Activated CD8-positive, alpha-beta memory T cell treated with anti-CD3 and anti-CD28 coated beads, Interleukin-2, amount 10 ng/mL, durations not matched to agents 7 days and 5 days (primary cell): ENCODE measurements at regions of chr17 and their contacts with region 1.

Region 1: DNA sequence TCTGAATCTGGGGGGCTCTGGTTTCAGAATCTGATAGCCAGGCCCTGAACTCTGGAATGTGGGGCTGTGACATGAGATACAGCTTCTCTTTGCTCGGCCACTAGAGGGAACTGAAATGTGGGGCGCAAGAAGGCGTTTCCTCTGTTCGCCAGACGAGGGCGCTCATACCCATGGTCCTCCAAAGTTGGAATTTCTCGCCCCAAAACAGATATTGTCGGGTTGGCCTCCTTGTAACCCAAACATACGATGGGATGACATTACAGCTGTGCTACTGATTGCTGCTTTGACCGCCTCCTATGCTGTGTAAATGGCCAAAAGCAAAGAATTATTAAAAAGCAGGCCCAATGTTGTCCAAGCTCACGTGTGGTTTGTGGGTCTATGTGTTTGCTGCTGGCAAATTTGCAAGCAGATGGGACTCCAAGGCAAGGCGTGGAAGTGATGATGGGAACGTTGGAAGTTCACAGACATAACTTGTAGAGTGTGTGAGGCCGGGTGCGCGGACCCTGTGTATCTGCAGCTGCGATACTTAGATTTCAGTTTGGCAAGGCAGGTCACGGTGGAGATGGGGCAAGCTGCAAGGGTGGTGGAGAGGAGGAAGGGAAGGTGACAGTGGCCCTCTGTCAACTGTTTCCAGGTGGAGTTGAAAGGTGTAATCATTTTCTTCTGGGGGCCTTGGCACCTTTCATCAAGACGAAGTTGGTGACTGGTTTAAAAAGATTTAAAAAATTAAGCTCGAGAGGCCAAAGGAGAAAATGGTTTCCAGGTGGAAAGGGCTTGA is 13.0 kb upstream of the MSI2 start:
- DNase-seq: peak; percentile 81
- ATAC-seq: peak; percentile 85
- H3K4me3 Mint-ChIP-seq: no peak overlapping the region
- H3K27ac Mint-ChIP-seq: no peak overlapping the region
- H3K4me1 Mint-ChIP-seq: peaks cover 6% of the 10 kb centered on the region
- H3K27me3 Mint-ChIP-seq: peaks cover 23% of the 10 kb centered on the region

Region 2: GRCh38 chr17:57357399-57357807 is 114.0 kb after region 1 on chr17:
- CTCF ChIA-PET with region 1: interaction called, 20 read pairs
- DNase-seq: no peak
- ATAC-seq: no peak
- H3K4me3 Mint-ChIP-seq: peak overlapping the region; percentile 9
- H3K27ac Mint-ChIP-seq: peak overlapping the region; percentile 79
- H3K4me1 Mint-ChIP-seq: peaks cover 54% of the 10 kb centered on the region
- H3K27me3 Mint-ChIP-seq: no peaks in the 10 kb centered on the region

Region 3: GRCh38 chr17:57440522-57441485 is 197.4 kb after region 1 on chr17:
- CTCF ChIA-PET with region 1: interaction called, 27 read pairs
- DNase-seq: peak; percentile 80
- ATAC-seq: peak; percentile 80
- H3K4me3 Mint-ChIP-seq: peak overlapping the region; percentile 10
- H3K27ac Mint-ChIP-seq: peak overlapping the region; percentile 85
- H3K4me1 Mint-ChIP-seq: peaks cover 55% of the 10 kb centered on the region
- H3K27me3 Mint-ChIP-seq: no peaks in the 10 kb centered on the region

Region 4: GRCh38 chr17:57515656-57516211 is 272.4 kb after region 1 on chr17:
- CTCF ChIA-PET with region 1: interaction called, 10 read pairs
- DNase-seq: no peak
- ATAC-seq: no peak
- H3K4me3 Mint-ChIP-seq: no peak overlapping the region
- H3K27ac Mint-ChIP-seq: no peak overlapping the region
- H3K4me1 Mint-ChIP-seq: peaks cover 3% of the 10 kb centered on the region
- H3K27me3 Mint-ChIP-seq: no peaks in the 10 kb centered on the region

Region 5: DNA sequence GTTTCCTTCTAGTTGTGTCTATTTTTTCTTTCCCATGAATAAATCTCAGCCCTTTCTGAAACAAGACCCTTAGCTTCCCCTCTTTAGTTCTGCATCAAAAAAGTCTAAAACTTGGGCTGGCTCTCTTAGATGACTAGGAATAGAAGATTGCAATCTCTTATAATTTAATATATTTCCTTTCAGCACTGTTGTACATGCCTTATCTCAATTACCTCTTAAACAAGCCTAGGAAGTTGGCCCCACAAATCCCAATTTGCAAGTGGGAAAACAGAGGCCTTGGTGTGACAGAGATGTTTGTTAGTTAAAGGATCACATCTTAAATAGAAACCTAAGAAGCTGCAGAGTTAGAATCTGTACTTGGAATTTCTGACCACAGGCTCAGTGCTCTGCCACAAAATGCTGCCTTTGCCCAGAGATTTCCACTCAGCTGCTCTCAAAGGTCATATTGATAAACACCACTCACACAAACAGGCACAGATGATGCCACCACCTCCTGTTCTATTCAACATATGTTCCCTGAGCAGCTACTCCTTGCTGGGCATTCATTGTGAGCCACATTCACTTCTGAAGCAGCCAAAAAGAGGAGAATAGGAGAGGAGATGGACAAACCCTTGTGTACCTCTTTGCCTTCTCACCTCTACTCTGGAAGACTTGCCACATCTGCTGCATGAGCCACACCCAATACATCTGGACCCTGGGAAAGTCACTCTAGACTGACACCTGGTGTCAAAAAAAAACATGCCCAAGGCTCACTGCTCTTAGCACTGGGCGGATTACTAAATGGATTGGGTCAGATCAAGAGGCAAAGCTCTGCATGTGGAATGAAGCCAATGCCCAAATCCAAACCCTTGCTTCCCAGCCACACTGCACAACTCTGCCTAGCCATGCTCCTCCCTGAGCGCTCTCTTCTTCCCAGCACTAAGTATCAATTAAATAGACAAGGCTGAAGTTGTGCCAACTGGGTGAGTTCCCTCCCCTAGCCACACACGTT is 496.3 kb after region 1 on chr17:
- CTCF ChIA-PET with region 1: interaction called, 34 read pairs
- DNase-seq: no peak
- ATAC-seq: peak; percentile 89
- H3K4me3 Mint-ChIP-seq: no peak overlapping the region
- H3K27ac Mint-ChIP-seq: no peak overlapping the region
- H3K4me1 Mint-ChIP-seq: peaks cover 11% of the 10 kb centered on the region
- H3K27me3 Mint-ChIP-seq: peaks cover 25% of the 10 kb centered on the region

Region 6: DNA sequence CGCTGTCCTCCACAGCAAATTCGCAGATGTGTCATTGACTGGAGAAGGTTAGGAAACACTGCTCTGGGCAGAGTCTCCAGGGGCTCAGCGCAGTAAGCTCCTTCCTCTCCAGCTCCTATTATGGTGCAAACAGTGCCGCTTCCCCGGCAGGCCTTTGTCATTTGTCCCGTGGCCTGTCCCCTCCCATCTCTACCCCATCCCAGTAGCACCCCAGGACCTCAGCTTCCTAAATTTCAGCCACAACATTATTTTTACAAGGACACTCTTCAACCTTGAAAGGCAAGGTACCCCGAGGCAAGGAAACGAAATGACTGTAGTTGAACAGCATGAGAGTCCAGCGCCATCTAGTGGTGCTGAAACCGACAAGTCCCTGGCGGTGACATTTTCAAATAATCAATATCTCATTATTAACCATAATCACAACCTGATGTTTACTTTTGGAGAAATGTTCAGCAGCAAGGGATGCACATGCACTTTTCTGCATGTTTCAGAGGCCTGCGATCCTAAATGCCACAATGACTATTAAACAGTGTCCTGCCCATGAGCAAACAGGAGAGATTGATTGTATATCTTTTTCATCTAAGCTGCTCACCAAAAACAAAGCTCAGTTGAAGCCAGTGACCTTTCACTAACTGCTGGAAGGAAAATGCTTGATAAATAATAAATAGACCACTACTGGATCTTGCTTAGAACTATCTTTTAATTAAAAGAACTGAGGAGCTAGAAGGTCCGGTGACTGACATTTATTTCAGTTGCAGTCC is 590.0 kb after region 1 on chr17:
- CTCF ChIA-PET with region 1: interaction called, 22 read pairs
- DNase-seq: peak; percentile 82
- ATAC-seq: peak; percentile 78
- H3K4me3 Mint-ChIP-seq: no peak overlapping the region
- H3K27ac Mint-ChIP-seq: no peak overlapping the region
- H3K4me1 Mint-ChIP-seq: peaks cover 4% of the 10 kb centered on the region
- H3K27me3 Mint-ChIP-seq: no peaks in the 10 kb centered on the region